ENCODE measurements at regions of chr16 and their contacts with region 1.

Region 1: DNA sequence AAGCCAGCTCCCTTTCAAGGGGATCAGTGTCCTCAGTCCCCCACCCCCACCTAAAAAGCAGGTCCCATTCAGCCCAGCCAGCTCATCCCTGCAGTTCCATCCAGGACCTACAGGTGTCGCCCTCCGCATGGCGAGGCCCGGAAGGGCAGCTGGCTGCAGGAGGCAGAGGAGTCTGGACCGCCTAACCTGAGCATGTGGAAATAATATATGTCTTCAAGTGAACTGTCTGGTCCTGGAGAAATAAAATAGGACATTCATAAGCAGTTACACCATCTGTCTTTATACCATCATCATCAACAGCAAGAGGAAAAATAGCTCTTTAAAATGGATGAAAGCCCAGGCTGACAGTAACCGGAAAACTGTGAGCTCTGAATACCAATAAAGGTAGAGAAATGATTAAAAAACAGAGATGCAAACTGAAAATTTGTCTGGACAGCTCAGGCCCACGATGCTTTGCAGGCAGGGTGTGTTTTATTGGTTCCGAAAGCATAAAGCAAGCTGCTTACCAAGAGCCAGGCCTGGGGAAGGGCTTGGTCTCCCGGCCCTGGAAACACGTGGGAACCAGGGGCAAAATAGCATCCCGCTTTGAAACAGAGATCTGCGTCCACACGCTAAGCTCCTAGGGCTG is 215.2 kb downstream of the ZFHX3 start:
- DNase-seq: peak; percentile 93
- H3K4me3 Mint-ChIP-seq: no peak overlapping the region
- H3K27ac Mint-ChIP-seq: no peak overlapping the region
- H3K4me1 Mint-ChIP-seq: peaks cover 5% of the 10 kb centered on the region
- H3K27me3 Mint-ChIP-seq: peaks cover 3% of the 10 kb centered on the region

Region 2: DNA sequence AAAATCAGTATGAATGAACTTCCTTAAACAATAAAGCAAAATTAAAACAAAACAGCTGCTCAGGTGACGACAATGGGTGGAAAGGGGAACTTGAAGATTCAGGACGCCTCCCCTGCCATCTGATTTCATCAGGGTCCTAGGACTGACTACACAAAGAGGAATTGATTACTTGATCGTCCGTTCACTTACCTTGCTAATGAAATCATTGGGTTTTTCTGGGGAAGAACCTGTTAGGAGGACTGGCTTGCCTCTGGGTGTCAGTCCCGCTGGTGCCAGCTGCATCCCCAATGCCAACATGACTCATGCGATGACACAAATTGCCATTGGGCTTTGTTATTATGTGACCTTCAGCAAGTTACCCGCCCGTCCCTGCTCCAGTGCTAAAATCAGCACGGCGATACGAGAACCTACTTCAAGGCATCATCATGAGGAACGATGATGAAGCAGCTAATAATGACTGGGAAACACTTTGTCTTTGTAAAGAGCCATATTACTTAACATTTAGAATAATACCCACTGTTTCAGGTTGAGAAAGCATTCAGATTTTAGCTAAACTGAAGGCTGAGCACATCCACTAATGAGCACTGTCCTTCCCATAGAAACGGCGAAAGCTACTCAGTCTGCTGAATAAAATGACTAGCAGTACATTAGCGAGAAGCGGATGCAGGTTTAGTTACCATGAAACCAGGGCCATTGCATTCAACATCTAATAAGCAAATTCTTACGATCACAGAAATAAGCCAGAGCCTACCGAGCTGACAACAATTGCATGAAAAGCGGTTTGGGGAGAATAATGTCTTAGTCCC is 75.8 kb after region 1 on chr16:
- intact Hi-C with region 1: no loop called
- DNase-seq: no peak
- H3K4me3 Mint-ChIP-seq: no peak overlapping the region
- H3K27ac Mint-ChIP-seq: no peak overlapping the region
- H3K4me1 Mint-ChIP-seq: no peaks in the 10 kb centered on the region
- H3K27me3 Mint-ChIP-seq: peaks cover 1% of the 10 kb centered on the region

Region 3: DNA sequence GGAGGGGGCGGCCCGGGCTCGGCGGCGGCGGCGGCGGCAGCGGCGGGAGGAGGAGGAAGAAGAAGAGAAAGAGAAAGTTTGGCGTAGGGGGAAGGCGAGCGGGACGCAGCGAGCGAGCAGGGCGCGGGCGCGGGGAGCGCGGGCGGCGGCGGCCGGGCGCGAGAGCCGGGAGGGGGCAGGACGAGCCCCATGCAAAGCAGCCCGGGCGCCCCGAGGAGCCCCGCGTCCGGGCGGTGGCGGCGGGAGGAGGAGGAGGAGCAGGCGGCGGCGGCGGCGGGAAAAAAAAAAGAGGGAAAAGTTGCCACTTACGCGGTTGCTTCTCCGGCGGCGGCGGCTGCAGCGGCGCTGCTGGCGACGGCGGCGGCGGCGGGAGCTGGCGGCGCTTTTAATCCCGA is 225.5 kb after region 1 on chr16:
- intact Hi-C with region 1: loop called (anchors 5 kb)
- DNase-seq: peak; percentile 83
- H3K4me3 Mint-ChIP-seq: peak overlapping the region; percentile 44
- H3K27ac Mint-ChIP-seq: no peak overlapping the region
- H3K4me1 Mint-ChIP-seq: peaks cover 23% of the 10 kb centered on the region
- H3K27me3 Mint-ChIP-seq: peaks cover 66% of the 10 kb centered on the region

Region 4: GRCh38 chr16:73196670-73197069 is 363.9 kb after region 1 on chr16:
- intact Hi-C with region 1: loop called (anchors 5 kb)
- DNase-seq: peak; percentile 76
- H3K4me3 Mint-ChIP-seq: no peak overlapping the region
- H3K27ac Mint-ChIP-seq: no peak overlapping the region
- H3K4me1 Mint-ChIP-seq: no peaks in the 10 kb centered on the region
- H3K27me3 Mint-ChIP-seq: peaks cover 3% of the 10 kb centered on the region

Measured in activated CD4-positive, alpha-beta T cell treated with anti-CD3 and anti-CD28 coated beads, Interleukin-2, amount 10 ng/mL, durations not matched to agents 24 days and 14 days (primary cell).